Activated naive CD8-positive, alpha-beta T cell treated with anti-CD3 and anti-CD28 coated beads, Interleukin-2, amount 10 ng/mL, durations not matched to agents 7 days and 5 days (primary cell): ENCODE measurements at regions of chr12 and their contacts with region 1.

Region 1: DNA sequence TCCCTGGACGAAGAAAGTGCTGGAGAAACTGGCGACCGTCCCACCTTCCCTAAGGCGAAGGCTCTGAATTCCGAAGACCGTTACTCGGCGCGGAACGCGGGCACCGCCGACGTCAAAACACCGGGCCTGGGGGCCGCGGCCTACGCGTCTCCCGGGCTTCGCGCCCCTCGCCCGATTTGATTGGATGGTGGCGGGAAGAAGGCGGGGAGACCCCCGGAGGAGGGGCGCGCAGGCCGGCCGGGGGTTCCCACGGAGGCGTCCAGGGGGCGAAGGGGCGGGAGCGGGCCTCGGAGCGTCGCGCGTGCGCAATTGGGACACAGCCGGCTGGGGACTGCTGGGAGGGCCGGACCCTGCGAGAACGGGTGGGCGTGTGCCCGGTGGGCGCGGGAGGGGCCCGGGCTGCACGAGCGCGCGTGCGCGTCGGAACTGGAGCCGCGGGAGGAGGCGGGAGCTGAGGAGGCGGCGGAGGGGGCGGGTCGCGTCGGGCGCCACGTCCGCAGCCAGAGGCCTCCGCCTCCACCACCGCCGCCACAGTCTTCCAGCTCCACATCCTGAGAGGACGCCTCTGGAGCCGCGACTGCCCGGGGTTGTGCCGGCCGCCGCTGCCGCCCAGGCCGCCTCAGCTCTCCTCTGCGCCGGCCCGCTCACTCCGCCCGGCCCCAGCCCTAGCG is at the start of gene TMEM263:
- DNase-seq: peak; percentile 94
- ATAC-seq: peak; percentile 87
- H3K4me3 Mint-ChIP-seq: peak within 1 kb of the TSS; percentile 95
- H3K27ac Mint-ChIP-seq: peak within 1 kb of the TSS; percentile 94
- H3K4me1 Mint-ChIP-seq: peaks cover 15% of the 10 kb centered on the region
- H3K27me3 Mint-ChIP-seq: peaks cover 5% of the 10 kb centered on the region
- total RNA-seq, gene TMEM263: 28.5 to 29.6 TPM

Region 2: GRCh38 chr12:106986625-106987430 is 31.3 kb after region 1 on chr12 and contains the start of gene MTERF2:
- POLR2A ChIA-PET with region 1: interaction called, 11 read pairs
- DNase-seq: peak; percentile 81
- ATAC-seq: peak; percentile 98
- H3K4me3 Mint-ChIP-seq: peak within 1 kb of the TSS; percentile 90
- H3K27ac Mint-ChIP-seq: peak within 1 kb of the TSS; percentile 82
- H3K4me1 Mint-ChIP-seq: peaks cover 24% of the 10 kb centered on the region
- H3K27me3 Mint-ChIP-seq: no peaks in the 10 kb centered on the region
- total RNA-seq, gene MTERF2: 6.8 to 7.9 TPM